Activated CD8-positive, alpha-beta T cell treated with anti-CD3 and anti-CD28 coated beads for 36 hours (primary cell): ENCODE measurements at regions of chr6 and their contacts with region 1.

Region 1: GRCh38 chr6:29649701-29650673 is 6.9 kb upstream of the MOG start:
- DNase-seq: peak; percentile 99
- ATAC-seq: peak; percentile 97
- H3K4me3 Mint-ChIP-seq: peak overlapping the region; percentile 84
- H3K27ac Mint-ChIP-seq: peak overlapping the region; percentile 98
- H3K4me1 Mint-ChIP-seq: peaks cover 4% of the 10 kb centered on the region
- H3K27me3 Mint-ChIP-seq: peaks cover 3% of the 10 kb centered on the region
- CTCF ChIP-seq: peak; percentile 98

Region 2: DNA sequence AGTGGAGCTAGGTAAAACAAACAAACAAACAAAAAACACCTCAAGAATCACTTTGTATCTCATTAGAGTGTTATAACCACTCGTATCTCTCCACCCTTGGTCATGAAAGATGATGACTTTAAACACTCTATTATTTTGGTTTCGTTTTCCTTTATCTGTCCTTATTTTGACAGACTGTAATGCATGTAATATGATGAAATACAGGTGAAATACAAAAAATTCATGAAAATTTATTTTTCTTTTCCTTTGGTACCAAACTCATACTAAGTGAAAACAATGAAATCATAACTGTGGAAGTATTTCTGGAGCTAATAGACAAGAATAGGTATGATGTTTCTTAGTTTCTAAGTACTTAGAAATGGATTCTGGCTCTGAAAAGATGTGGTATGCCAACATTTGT is 250.5 kb before region 1 on chr6:
- CTCF ChIA-PET with region 1: no interaction called
- POLR2A ChIA-PET with region 1: no interaction called
- intact Hi-C with region 1: no loop called
- DNase-seq: no peak
- ATAC-seq: no peak
- H3K4me3 Mint-ChIP-seq: no peak overlapping the region
- H3K27ac Mint-ChIP-seq: no peak overlapping the region
- H3K4me1 Mint-ChIP-seq: no peaks in the 10 kb centered on the region
- H3K27me3 Mint-ChIP-seq: peaks cover 36% of the 10 kb centered on the region
- CTCF ChIP-seq: no peak

Region 3: DNA sequence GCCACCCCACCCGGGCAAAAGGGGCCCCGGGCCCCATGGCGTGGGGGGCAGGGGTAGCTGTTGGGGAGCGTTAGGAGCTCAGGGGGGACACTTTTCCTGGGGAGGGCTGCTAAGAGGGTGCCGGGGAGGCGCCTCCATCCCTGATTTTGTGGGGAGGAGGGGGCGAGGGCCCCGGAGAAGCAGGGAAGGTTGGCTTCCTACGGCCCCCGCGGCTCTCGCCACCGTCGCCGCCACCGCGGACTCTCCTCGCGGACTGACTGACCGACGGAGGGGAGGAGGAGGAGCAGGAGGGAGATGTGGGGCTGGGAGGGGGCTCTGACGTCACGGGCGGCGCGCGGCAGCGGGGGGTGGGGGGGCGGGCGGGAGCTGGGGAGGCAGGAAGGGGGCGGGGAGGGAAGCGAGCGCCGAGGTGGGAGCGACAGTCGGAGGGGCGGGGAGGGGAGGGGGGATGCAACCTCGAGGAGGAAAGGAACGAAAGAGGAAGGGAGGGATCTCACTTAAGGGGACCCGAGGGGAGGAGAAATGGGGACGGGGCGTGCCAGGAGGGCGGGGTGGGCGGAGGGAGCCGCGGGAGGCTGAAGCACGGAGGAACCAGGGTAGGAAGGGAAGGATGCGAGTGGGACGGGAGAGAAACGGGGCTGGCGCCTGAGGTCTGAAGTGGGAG is 22.1 kb before region 1 on chr6:
- CTCF ChIA-PET with region 1: interaction called, 61 read pairs
- POLR2A ChIA-PET with region 1: interaction called, 6 read pairs
- intact Hi-C with region 1: no loop called
- DNase-seq: peak; percentile 57
- ATAC-seq: peak; percentile 21
- H3K4me3 Mint-ChIP-seq: peak overlapping the region; percentile 79
- H3K27ac Mint-ChIP-seq: peak overlapping the region; percentile 59
- H3K4me1 Mint-ChIP-seq: peaks cover 20% of the 10 kb centered on the region
- H3K27me3 Mint-ChIP-seq: peaks cover 6% of the 10 kb centered on the region
- CTCF ChIP-seq: no peak

Region 4: DNA sequence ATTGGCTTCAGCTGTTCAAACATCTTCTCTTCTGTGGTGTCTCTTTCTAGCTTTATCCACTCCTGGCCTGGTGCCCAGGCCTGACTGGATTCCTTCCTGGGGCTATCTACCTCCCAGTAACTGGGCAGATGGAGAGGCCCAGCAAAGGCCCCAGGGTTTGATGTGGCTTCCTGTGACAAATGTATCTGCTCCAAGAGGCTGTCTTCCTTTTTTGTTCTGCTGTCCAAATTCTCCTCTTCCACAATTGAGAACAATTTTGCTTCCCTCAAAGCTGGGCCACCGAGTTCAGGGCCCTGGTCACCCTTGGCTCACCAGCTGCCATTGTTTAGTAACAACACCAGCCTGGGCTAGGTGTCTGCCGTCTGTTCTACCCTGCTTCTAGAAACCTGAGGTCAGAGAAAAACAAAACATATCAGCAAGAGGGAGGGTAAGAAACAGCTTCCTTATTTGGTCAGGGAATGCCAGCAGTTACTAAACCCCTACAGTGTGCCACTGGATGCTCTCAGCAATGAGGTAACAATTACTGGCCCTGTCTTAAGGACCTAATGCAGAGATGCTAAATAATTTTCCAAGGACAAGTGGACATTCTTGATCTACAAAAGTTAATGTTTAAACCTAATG is 27.1 kb after region 1 on chr6:
- CTCF ChIA-PET with region 1: interaction called, 94 read pairs
- POLR2A ChIA-PET with region 1: no interaction called
- intact Hi-C with region 1: no loop called
- DNase-seq: no peak
- ATAC-seq: no peak
- H3K4me3 Mint-ChIP-seq: no peak overlapping the region
- H3K27ac Mint-ChIP-seq: no peak overlapping the region
- H3K4me1 Mint-ChIP-seq: peaks cover 2% of the 10 kb centered on the region
- H3K27me3 Mint-ChIP-seq: peaks cover 7% of the 10 kb centered on the region
- CTCF ChIP-seq: no peak

Region 5: GRCh38 chr6:29724937-29725869 is 75.2 kb after region 1 on chr6:
- CTCF ChIA-PET with region 1: interaction called, 11 read pairs
- POLR2A ChIA-PET with region 1: no interaction called
- intact Hi-C with region 1: no loop called
- DNase-seq: no peak
- ATAC-seq: no peak
- H3K4me3 Mint-ChIP-seq: peak overlapping the region; percentile 93
- H3K27ac Mint-ChIP-seq: peak overlapping the region; percentile 94
- H3K4me1 Mint-ChIP-seq: peaks cover 66% of the 10 kb centered on the region
- H3K27me3 Mint-ChIP-seq: no peaks in the 10 kb centered on the region
- CTCF ChIP-seq: no peak

Region 6: GRCh38 chr6:29763491-29764289 is 113.7 kb after region 1 on chr6:
- CTCF ChIA-PET with region 1: interaction called, 11 read pairs
- POLR2A ChIA-PET with region 1: no interaction called
- intact Hi-C with region 1: no loop called
- DNase-seq: peak; percentile 55
- ATAC-seq: peak; percentile 93
- H3K4me3 Mint-ChIP-seq: no peak overlapping the region
- H3K27ac Mint-ChIP-seq: peak overlapping the region; percentile 39
- H3K4me1 Mint-ChIP-seq: peaks cover 15% of the 10 kb centered on the region
- H3K27me3 Mint-ChIP-seq: peaks cover 6% of the 10 kb centered on the region
- CTCF ChIP-seq: no peak

Region 7: GRCh38 chr6:29834564-29835436 is 184.8 kb after region 1 on chr6:
- CTCF ChIA-PET with region 1: interaction called, 20 read pairs
- POLR2A ChIA-PET with region 1: no interaction called
- intact Hi-C with region 1: no loop called
- DNase-seq: peak; percentile 63
- ATAC-seq: peak; percentile 45
- H3K4me3 Mint-ChIP-seq: no peak overlapping the region
- H3K27ac Mint-ChIP-seq: no peak overlapping the region
- H3K4me1 Mint-ChIP-seq: no peaks in the 10 kb centered on the region
- H3K27me3 Mint-ChIP-seq: peaks cover 44% of the 10 kb centered on the region
- CTCF ChIP-seq: peak; percentile 95